Colonic mucosa (tissue), 4 donors: ENCODE measurements at regions of chr6 and their contacts with region 1.

Region 1: DNA sequence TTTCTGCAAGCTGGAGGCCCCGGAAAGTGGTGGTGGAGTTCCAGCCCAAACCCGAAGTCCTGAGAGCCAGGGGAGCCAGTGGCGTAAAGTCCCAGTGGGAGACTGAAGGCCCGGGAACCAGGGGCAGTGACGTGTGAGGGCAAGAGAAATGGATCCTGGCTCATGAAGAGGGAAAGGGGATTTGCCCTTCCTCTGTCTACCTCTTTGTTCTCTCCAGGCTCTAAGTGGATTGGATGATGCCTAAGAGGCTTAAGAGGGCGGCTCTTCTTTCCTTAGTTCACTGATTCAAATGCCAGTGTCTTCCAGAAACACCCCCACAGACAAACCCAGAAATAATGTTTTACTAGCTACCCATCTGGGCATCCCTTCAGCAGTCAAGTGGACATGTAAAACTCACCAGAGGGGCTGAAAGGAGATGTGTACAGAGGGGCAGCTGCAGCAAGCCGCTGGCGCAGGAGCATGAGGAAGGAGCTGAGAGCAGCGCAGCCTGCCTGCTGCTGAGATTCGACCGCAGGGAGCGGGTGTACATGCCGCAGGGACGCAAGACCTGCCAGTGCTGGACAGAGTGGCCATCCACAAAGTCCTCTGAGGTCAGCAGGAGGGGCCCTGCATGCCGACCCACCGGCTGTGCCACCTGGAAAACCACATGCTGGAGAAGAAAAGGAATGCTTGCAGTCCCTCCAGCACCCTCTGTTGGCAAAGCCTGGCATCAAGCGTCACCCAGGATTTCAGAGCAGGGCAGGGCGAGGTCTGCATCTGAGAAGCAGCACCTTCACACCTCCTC is 29.5 kb downstream of the CDYL start:
- DNase-seq: peak; percentile 80
- H3K4me3 ChIP-seq: no peak overlapping the region
- H3K27ac ChIP-seq: no peak overlapping the region
- H3K4me1 ChIP-seq: peaks cover 10% of the 10 kb centered on the region
- H3K27me3 ChIP-seq: no peaks in the 10 kb centered on the region
- CTCF ChIP-seq: peak; percentile 68

Region 2: DNA sequence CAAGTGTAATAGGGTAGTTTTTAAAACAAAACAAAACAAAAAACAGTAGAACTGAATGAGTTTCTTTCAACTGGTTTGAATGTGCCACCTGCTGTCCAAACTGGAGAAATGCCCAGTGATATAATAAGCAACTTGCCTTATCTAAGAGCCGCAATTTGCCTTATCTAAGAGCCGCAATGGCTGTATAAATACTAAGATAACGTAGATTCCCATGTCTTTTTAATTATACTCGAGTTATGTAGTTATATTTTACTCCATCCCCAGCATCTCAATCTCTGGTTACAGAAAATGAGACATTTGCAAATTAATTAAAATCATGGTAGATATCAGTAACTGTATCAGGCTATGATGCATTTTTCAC is 130.9 kb after region 1 on chr6:
- intact Hi-C with region 1: loop called (anchors 10 kb)
- DNase-seq: no peak
- H3K4me3 ChIP-seq: no peak overlapping the region
- H3K27ac ChIP-seq: no peak overlapping the region
- H3K4me1 ChIP-seq: peaks cover 6% of the 10 kb centered on the region
- H3K27me3 ChIP-seq: no peaks in the 10 kb centered on the region
- CTCF ChIP-seq: peak; percentile 65